Dendritic cell treated with granulocyte-macrophage colony-stimulating factor and Interleukin-4, amounts not matched to agents 40 ng/mL and 50 ng/mL, for 4 days (primary cell): ENCODE measurements at regions of chr16 and their contacts with region 1.

Region 1: GRCh38 chr16:70298988-70299938 is at the start of gene DDX19B:
- H3K4me3 Mint-ChIP-seq: peak within 1 kb of the TSS; percentile 91
- H3K27ac Mint-ChIP-seq: peak within 1 kb of the TSS; percentile 97
- H3K4me1 Mint-ChIP-seq: peaks cover 36% of the 10 kb centered on the region
- H3K27me3 Mint-ChIP-seq: no peaks in the 10 kb centered on the region

Region 2: GRCh38 chr16:70345840-70346239 is 46.6 kb after region 1 on chr16:
- intact Hi-C with region 1: loop called (anchors 1 kb)
- H3K4me3 Mint-ChIP-seq: peak overlapping the region; percentile 97
- H3K27ac Mint-ChIP-seq: peak overlapping the region; percentile 98
- H3K4me1 Mint-ChIP-seq: peaks cover 17% of the 10 kb centered on the region
- H3K27me3 Mint-ChIP-seq: no peaks in the 10 kb centered on the region

Region 3: GRCh38 chr16:70679666-70680494 is 380.6 kb after region 1 on chr16:
- intact Hi-C with region 1: no loop called
- H3K4me3 Mint-ChIP-seq: no peak overlapping the region
- H3K27ac Mint-ChIP-seq: no peak overlapping the region
- H3K4me1 Mint-ChIP-seq: no peaks in the 10 kb centered on the region
- H3K27me3 Mint-ChIP-seq: peaks cover 10% of the 10 kb centered on the region